Naive thymus-derived CD8-positive, alpha-beta T cell (primary cell): ENCODE measurements at regions of chr5 and their contacts with region 1.

Region 1: GRCh38 chr5:134527146-134527960 is 1.9 kb downstream of the JADE2 start:
- DNase-seq: peak; percentile 57 to 85 (median 72)
- ATAC-seq: peak; percentile 21 to 28
- H3K4me3 Mint-ChIP-seq: peak overlapping the region; percentile 90 to 100 (median 94)
- H3K27ac Mint-ChIP-seq: peak overlapping the region; percentile 78 to 100 (median 94)
- H3K4me1 Mint-ChIP-seq: peaks cover 37 to 55% (median 53%) of the 10 kb centered on the region in 4 donors
- H3K27me3 Mint-ChIP-seq: no peaks in the 10 kb centered on the region

Region 2: GRCh38 chr5:133779828-133780475 is 747.4 kb before region 1 on chr5:
- POLR2A ChIA-PET with region 1: no interaction called
- DNase-seq: no peak
- ATAC-seq: no peak
- H3K4me3 Mint-ChIP-seq: no peak overlapping the region
- H3K27ac Mint-ChIP-seq: no peak overlapping the region
- H3K4me1 Mint-ChIP-seq: no peaks in the 10 kb centered on the region
- H3K27me3 Mint-ChIP-seq: no peaks in the 10 kb centered on the region

Region 3: GRCh38 chr5:134225618-134226440 is 301.5 kb before region 1 on chr5 and contains the start of gene PPP2CA:
- POLR2A ChIA-PET with region 1: interaction called, 33 read pairs
- DNase-seq: peak; percentile 97 to 100 (median 99)
- ATAC-seq: peak; percentile 73 to 76
- H3K4me3 Mint-ChIP-seq: peak within 1 kb of the TSS; percentile 88 to 100 (median 96)
- H3K27ac Mint-ChIP-seq: peak within 1 kb of the TSS; percentile 92 to 99 (median 98)
- H3K4me1 Mint-ChIP-seq: peaks cover 23 to 60% (median 52%) of the 10 kb centered on the region in 4 donors
- H3K27me3 Mint-ChIP-seq: peaks cover 0 to 3% (median 0%) of the 10 kb centered on the region in 5 donors
- polyA plus RNA-seq, gene PPP2CA: 185 to 192 (median 191) TPM

Region 4: DNA sequence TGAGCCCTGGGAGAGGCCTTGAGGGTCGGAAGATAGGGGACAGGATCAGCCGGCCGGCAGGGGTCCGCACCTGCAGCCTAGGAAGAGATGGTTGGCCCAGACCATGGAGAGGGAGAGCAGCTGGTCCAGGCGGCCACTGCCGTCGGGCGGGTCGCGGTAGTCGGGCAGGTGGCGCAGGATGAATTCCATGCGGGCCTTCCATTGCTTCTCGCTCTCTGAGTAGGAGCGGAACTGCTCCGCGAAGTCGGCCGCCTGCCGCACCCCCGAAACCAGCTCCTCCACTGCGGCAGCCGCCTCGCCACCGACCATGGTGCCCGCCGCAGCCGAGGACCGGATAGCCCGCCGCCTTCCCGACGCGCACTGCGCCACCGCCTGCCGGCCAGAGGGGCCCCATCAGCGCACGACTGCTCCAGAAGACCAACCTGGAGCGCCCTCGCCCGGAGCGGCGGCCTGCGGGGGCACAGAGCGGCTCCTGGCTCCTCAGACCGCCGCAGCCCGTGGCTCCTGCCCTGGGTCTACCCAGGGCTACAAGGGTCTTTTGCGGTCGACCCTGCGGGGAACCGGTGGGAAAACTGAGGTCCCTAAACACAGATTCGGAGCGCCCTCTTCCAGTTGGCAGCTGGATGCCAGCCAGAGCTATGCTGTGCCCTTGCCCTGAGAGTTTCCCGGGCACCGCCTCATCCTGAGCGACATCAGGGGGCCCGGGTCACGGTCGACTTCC is 115.6 kb before region 1 on chr5 and contains the start of gene CDKN2AIPNL:
- POLR2A ChIA-PET with region 1: interaction called, 137 read pairs
- DNase-seq: peak; percentile 77 to 94 (median 88)
- ATAC-seq: peak; percentile 99
- H3K4me3 Mint-ChIP-seq: peak within 1 kb of the TSS; percentile 88 to 95 (median 93)
- H3K27ac Mint-ChIP-seq: peak within 1 kb of the TSS; percentile 85 to 96 (median 92)
- H3K4me1 Mint-ChIP-seq: peaks cover 16 to 41% (median 36%) of the 10 kb centered on the region in 4 donors
- H3K27me3 Mint-ChIP-seq: no peaks in the 10 kb centered on the region
- polyA plus RNA-seq, gene CDKN2AIPNL: 28.0 to 34.2 (median 33.6) TPM

Region 5: GRCh38 chr5:134451936-134452505 is 75.3 kb before region 1 on chr5:
- POLR2A ChIA-PET with region 1: no interaction called
- DNase-seq: no peak
- ATAC-seq: no peak
- H3K4me3 Mint-ChIP-seq: no peak overlapping the region
- H3K27ac Mint-ChIP-seq: no peak overlapping the region
- H3K4me1 Mint-ChIP-seq: peaks cover 0 to 12% (median 2%) of the 10 kb centered on the region in 4 donors
- H3K27me3 Mint-ChIP-seq: no peaks in the 10 kb centered on the region

Region 6: DNA sequence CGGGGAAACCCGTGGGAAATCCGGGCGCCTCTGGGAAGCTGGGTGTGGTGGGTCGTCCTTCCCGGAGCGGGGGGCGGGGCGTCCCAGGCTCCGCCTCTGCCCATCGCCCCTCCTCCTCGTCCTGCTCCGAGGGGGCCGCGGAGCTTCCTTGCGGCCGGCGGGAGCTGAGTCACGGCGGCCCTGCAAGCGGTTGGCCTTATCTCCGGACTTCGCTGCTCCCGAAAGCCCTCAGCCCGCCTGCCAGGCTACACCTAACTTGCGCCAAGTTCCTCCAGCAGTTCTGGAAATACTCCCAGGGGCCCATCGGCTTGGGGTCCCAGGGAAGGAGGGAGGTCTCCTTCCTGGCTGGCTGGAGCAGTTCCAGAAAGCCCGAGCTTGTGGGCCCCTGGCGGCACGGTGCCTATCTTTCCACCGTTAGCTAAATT is 61.5 kb before region 1 on chr5:
- POLR2A ChIA-PET with region 1: interaction called, 133 read pairs
- DNase-seq: peak in 8 of 10 donors; percentile 10 to 49 (median 36)
- ATAC-seq: peak; percentile 59 to 70
- H3K4me3 Mint-ChIP-seq: peak overlapping the region; percentile 78 to 89 (median 86)
- H3K27ac Mint-ChIP-seq: peak overlapping the region; percentile 81 to 92 (median 87)
- H3K4me1 Mint-ChIP-seq: peaks cover 7 to 33% (median 23%) of the 10 kb centered on the region in 4 donors
- H3K27me3 Mint-ChIP-seq: no peaks in the 10 kb centered on the region

Region 7: DNA sequence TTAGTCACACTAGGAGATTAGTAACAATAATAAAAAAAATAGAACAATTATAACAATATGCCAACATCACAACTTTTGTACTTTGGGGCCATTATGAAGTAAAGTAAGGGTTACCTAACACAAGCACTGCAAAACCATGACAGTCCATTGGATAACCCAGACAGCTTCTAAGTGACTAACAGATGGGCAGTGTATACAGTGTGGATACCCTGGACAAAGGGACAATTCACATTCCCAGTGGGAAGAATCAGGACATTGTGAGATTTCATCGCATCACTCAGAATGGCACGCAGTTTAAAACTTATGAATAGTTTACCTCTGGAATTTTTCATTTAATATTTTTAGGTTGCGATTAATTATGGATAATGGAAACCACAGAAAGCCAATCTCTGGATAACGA is 47.5 kb before region 1 on chr5:
- POLR2A ChIA-PET with region 1: no interaction called
- DNase-seq: no peak
- ATAC-seq: no peak
- H3K4me3 Mint-ChIP-seq: no peak overlapping the region
- H3K27ac Mint-ChIP-seq: no peak overlapping the region
- H3K4me1 Mint-ChIP-seq: no peaks in the 10 kb centered on the region
- H3K27me3 Mint-ChIP-seq: peaks cover 0 to 2% (median 0%) of the 10 kb centered on the region in 5 donors

Region 8: DNA sequence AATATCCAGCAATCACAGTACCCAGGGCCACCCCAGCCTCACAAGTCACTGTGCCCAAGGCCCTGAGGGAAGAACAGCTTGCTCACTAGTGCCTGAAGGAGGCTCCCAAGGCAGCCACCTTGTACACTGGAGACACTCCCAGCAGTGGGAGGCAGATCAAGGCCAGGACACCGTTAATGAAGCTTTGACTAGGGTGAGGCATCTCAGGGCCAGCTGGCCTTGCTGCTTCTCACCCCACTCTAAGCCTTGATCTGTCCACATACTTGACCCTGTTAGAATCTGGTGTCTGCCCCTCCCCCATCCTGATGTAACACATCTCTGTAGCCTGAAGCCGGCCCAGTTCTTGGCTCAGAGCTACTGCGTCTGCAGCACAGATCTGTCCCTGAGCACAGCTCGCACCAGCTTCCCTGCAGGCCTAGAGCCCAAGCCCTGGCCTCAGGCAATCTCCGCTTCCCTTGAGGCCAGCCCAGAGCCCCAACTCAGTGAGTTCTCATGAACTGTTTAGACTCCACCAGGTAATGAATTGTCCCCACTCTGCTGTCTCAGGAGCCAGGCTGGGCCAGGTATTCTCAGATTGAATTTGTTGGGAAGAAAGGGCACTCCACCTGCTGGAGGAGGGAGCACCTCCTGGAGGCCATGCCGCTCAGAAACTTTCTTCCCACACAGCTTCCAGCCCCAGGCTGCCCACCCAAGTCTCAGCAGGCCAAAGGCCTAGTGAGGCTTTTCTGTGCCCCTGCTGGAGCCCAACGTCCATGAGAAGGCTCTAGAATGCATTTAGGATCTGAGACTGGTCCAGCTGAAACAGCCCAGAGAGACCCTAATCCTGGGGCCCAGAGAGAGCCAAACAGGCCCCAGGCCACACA is 15.3 kb before region 1 on chr5:
- POLR2A ChIA-PET with region 1: interaction called, 11 read pairs
- DNase-seq: no peak
- ATAC-seq: no peak
- H3K4me3 Mint-ChIP-seq: no peak overlapping the region
- H3K27ac Mint-ChIP-seq: peak overlapping the region in 4 of 10 donors; percentile 34 to 70 (median 42)
- H3K4me1 Mint-ChIP-seq: peaks cover 6 to 10% (median 7%) of the 10 kb centered on the region in 4 donors
- H3K27me3 Mint-ChIP-seq: no peaks in the 10 kb centered on the region

Region 9: GRCh38 chr5:134555890-134556311 is 28.5 kb after region 1 on chr5:
- POLR2A ChIA-PET with region 1: interaction called, 33 read pairs
- DNase-seq: peak; percentile 49 to 92 (median 80)
- ATAC-seq: peak; percentile 96 to 97
- H3K4me3 Mint-ChIP-seq: peak overlapping the region; percentile 26 to 64 (median 54)
- H3K27ac Mint-ChIP-seq: peak overlapping the region; percentile 79 to 97 (median 90)
- H3K4me1 Mint-ChIP-seq: peaks cover 30 to 66% (median 48%) of the 10 kb centered on the region in 4 donors
- H3K27me3 Mint-ChIP-seq: peaks cover 0 to 3% (median 0%) of the 10 kb centered on the region in 5 donors

Region 10: DNA sequence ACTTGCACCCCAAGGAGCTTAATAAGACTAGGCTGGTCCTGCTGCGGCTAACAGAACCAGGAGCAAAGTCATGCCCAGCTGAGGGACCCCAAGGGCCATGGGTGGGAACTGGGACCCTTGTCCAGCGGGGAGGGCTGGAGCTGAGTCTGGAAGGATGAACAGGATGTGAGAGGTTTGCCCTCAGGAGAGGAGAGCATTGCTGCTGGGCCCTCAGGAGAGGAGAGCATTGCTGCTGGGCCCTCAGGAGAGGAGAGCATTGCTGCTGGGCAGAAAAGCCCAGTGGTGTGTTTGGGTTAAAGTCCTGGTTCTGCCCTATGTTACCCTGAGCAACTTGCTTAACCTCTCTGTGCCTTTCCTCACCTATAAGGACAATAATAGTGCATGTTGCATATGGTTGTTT is 745.9 kb after region 1 on chr5:
- POLR2A ChIA-PET with region 1: no interaction called
- DNase-seq: no peak
- ATAC-seq: no peak
- H3K4me3 Mint-ChIP-seq: no peak overlapping the region
- H3K27ac Mint-ChIP-seq: no peak overlapping the region
- H3K4me1 Mint-ChIP-seq: no peaks in the 10 kb centered on the region
- H3K27me3 Mint-ChIP-seq: peaks cover 0 to 3% (median 0%) of the 10 kb centered on the region in 5 donors